Thyroid gland (tissue), 4 donors: ENCODE measurements at regions of chr12 and their contacts with region 1.

Region 1: GRCh38 chr12:107884769-107885694 is 110.5 kb downstream of the ASCL4 start:
- DNase-seq: peak; percentile 57 to 62
- H3K4me3 ChIP-seq: no peak overlapping the region
- H3K27ac ChIP-seq: no peak overlapping the region
- H3K4me1 ChIP-seq: no peaks in the 10 kb centered on the region
- H3K27me3 ChIP-seq: no peaks in the 10 kb centered on the region
- CTCF ChIP-seq: peak; percentile 22 to 79 (median 62)
- POLR2A ChIP-seq: no peak

Region 2: GRCh38 chr12:107679336-107679735 is 205.7 kb before region 1 on chr12:
- intact Hi-C with region 1: loop called (anchors 5 kb)
- DNase-seq: no peak
- H3K4me3 ChIP-seq: no peak overlapping the region
- H3K27ac ChIP-seq: no peak overlapping the region
- H3K4me1 ChIP-seq: no peaks in the 10 kb centered on the region
- H3K27me3 ChIP-seq: no peaks in the 10 kb centered on the region
- CTCF ChIP-seq: no peak
- POLR2A ChIP-seq: no peak

Region 3: GRCh38 chr12:107779077-107779831 is 105.8 kb before region 1 on chr12:
- intact Hi-C with region 1: loop called (anchors 10 kb)
- DNase-seq: no peak
- H3K4me3 ChIP-seq: no peak overlapping the region
- H3K27ac ChIP-seq: no peak overlapping the region
- H3K4me1 ChIP-seq: peaks cover 5 to 8% of the 10 kb centered on the region in 2 donors
- H3K27me3 ChIP-seq: peaks cover 19% of the 10 kb centered on the region
- CTCF ChIP-seq: no peak
- POLR2A ChIP-seq: no peak

Region 4: DNA sequence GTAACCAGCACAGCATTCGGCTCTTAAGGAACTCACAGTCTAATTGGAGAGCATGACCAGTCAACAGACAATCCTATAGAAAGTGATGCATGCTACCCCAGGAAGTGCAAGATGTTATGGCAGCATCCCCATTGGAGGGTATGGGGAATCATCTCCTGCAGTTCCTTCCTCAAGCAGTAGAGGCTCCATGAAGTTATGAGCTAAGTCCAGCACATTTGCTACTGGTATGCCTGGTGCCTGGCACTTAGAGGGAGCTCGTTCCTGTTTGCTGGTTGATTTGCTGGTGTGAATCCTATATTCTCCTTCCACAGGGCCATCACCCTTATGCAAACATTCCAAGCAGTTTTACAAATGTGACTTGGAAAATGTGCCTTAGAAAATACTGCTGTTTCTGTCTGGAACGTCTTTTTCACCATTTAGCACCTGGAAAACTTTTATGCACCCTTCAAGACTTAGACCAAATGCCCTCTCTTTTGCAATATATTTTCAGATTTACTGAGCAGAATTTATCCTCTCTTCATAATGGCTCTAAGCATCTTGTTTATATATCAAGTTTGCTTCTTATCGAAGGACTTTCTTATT is 107.9 kb after region 1 on chr12:
- intact Hi-C with region 1: no loop called
- DNase-seq: peak; percentile 32 to 39
- H3K4me3 ChIP-seq: no peak overlapping the region
- H3K27ac ChIP-seq: no peak overlapping the region
- H3K4me1 ChIP-seq: no peaks in the 10 kb centered on the region
- H3K27me3 ChIP-seq: no peaks in the 10 kb centered on the region
- CTCF ChIP-seq: peak; percentile 30 to 68 (median 54)
- POLR2A ChIP-seq: no peak